ENCODE measurements at regions of chrX and their contacts with region 1.

Region 1: DNA sequence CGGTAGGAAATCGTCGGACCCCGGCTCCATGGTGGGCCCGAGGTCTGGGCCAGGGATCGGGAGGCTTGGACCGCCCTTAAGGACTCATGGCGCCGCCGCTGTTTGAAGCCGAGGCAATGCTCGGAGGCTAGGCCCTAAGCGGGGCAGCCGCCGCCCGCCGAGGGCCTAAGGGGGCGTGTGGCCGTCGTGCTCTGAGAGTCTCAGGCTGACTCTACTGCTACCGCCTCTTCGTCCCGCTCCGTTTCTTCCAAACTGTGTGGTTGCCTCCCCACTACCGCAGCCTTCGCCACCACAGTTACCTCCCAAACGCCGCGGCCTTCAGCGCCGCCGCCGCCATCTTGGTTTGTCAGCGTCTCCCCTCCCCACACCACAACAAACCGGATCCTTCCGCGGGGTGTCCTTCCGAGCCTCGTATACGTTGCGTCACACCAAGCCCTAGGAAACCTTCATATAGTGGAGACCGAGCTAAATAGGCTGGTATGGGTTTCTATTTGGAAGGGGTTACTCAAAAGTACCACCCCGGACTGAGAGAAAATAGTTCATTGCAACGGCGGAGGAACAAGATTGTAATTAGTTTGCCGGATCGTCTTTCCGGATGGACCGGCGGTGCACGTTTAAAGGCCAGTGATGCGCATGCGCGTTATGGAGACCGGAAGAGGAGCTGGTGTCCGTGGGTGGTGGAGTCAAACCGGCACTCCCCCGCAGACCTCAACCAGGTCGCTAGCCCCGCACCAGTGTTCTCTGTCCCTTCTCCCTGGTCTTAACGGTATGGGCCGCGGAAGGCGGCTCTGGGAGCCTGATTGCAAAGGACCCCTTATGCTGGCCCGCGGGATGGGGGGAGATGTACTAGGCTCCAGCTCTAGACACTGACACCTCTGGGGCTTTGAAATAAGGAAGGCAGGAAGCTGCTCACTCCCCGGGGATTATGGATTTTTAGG is at the start of gene KDM5C:
- DNase-seq: peak; percentile 86 to 88
- ATAC-seq: peak; percentile 91 to 95 (median 93)
- H3K4me3 ChIP-seq: peak within 1 kb of the TSS; percentile 65 to 99 (median 89)
- H3K27ac ChIP-seq: peak within 1 kb of the TSS; percentile 82 to 95 (median 90)
- H3K4me1 ChIP-seq: peaks cover 0 to 42% (median 23%) of the 10 kb centered on the region in 9 donors
- H3K27me3 ChIP-seq: peaks cover 0 to 3% (median 0%) of the 10 kb centered on the region in 7 donors
- CTCF ChIP-seq: no peak
- total RNA-seq, gene KDM5C: 26.0 to 56.1 (median 34.5) TPM

Region 2: GRCh38 chrX:53093748-53094583 is 131.2 kb before region 1 on chrX and contains the start of gene KANTR:
- intact Hi-C with region 1: loop called in 1 of 10 experiments (anchors 10 kb)
- DNase-seq: peak; percentile 74 to 92
- ATAC-seq: peak; percentile 89 to 97 (median 95)
- H3K4me3 ChIP-seq: peak within 1 kb of the TSS; percentile 47 to 78 (median 72)
- H3K27ac ChIP-seq: peak within 1 kb of the TSS; percentile 65 to 90 (median 86)
- H3K4me1 ChIP-seq: peaks cover 0 to 15% (median 8%) of the 10 kb centered on the region in 9 donors
- H3K27me3 ChIP-seq: peaks cover 0 to 4% (median 0%) of the 10 kb centered on the region in 7 donors
- CTCF ChIP-seq: peak in 3 of 9 donors; percentile 6 to 23 (median 12)
- total RNA-seq, gene KANTR: 2.7 to 11.5 (median 7.0) TPM

Region 3: DNA sequence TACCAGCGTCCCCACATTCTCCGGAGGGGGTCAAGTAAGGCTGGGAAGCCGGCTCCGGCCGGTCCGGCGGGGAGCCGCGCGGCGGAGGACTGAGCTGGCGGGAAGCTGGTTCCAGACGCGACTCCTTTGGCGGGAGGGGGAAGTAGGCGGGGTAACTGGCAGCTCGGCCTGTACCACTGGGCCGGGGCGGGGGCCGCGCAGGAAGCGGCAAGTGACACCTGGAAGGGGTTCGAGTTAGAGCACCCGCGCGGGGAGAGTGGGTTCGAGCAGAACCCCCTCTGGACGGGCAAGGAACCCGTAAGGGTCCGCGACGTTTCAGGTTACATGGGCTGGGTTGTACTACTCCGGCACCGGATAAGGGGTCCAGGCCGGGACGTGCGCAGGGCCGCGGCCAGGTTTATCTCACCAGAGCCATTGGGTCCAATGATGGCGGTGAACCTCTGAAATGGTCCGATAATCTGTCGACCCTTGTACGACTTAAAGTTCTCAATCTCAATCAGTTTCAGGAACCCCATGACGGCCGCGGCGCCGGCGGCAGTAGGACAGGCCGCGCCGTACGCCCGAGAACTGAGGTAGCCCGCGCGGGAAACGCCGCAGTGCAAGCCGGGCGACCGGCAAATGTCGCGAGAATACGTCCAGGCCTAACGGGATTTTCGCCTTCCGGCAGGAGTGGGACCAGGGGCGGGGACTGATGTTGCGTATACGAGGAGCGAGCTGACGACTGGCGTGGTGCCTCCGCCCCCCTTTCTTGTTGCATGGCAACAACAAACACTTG is 197.1 kb after region 1 on chrX and contains the start of gene SMC1A:
- intact Hi-C with region 1: loop called in 1 of 10 experiments (anchors 10 kb)
- DNase-seq: peak; percentile 94 to 97
- ATAC-seq: peak; percentile 97 to 99 (median 98)
- H3K4me3 ChIP-seq: peak within 1 kb of the TSS; percentile 50 to 83 (median 70)
- H3K27ac ChIP-seq: peak within 1 kb of the TSS; percentile 81 to 96 (median 92)
- H3K4me1 ChIP-seq: peaks cover 0 to 29% (median 14%) of the 10 kb centered on the region in 9 donors
- H3K27me3 ChIP-seq: no peaks in the 10 kb centered on the region
- CTCF ChIP-seq: no peak
- total RNA-seq, gene SMC1A: 27.4 to 55.1 (median 35.8) TPM

Region 4: GRCh38 chrX:53433651-53434639 is 208.8 kb after region 1 on chrX and contains the start of gene HSD17B10:
- intact Hi-C with region 1: loop called in 2 of 10 experiments (anchors 10 kb)
- DNase-seq: peak; percentile 88 to 89
- ATAC-seq: peak; percentile 97 to 100 (median 99)
- H3K4me3 ChIP-seq: peak within 1 kb of the TSS; percentile 46 to 77 (median 64)
- H3K27ac ChIP-seq: peak within 1 kb of the TSS in 9 of 10 donors; percentile 53 to 83 (median 73)
- H3K4me1 ChIP-seq: peaks cover 0 to 16% (median 4%) of the 10 kb centered on the region in 9 donors
- H3K27me3 ChIP-seq: peaks cover 0 to 60% (median 0%) of the 10 kb centered on the region in 7 donors
- CTCF ChIP-seq: no peak
- total RNA-seq, gene HSD17B10: 43.9 to 126 (median 105) TPM

Region 5: DNA sequence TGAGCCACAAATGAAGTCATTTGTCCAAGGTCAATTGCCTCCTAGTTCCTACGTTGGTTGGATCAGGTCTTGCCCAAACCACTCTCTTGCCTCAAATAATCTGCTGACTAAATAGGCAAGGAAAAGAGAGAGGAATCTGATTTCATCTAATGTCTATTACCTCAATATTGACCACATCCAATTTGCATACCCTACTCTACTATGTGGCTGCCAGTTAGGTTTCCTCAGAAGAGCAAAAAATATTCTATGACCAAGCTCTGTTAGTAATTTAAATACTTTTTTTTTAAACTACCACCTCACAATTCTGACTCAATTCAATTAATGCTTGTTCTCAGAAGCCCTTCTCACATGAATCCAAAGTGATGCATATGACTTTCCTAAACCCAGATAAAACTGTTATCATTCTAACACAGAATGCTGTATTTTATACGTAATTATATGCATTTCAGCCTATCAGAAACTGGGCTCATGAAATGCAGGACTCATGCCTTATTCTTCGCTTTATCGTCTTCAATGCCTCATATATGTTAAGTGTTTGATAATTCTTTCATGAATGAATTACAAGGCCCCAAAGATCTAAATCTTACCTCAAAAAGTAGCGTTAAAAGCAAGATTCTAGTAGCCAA is 362.8 kb after region 1 on chrX:
- intact Hi-C with region 1: no loop called
- DNase-seq: no peak
- ATAC-seq: no peak
- H3K4me3 ChIP-seq: no peak overlapping the region
- H3K27ac ChIP-seq: no peak overlapping the region
- H3K4me1 ChIP-seq: no peaks in the 10 kb centered on the region
- H3K27me3 ChIP-seq: peaks cover 0 to 25% (median 0%) of the 10 kb centered on the region in 7 donors
- CTCF ChIP-seq: no peak

Measured in heart right ventricle (tissue), 16 donors.